Activated CD4-positive, alpha-beta T cell treated with anti-CD3 and anti-CD28 coated beads for 36 hours (primary cell): ENCODE measurements at regions of chr9 and their contacts with region 1.

Region 1: GRCh38 chr9:87324613-87325194 is 173.0 kb upstream of the DAPK1 start:
- DNase-seq: no peak
- ATAC-seq: no peak
- H3K4me3 Mint-ChIP-seq: no peak overlapping the region
- H3K27ac Mint-ChIP-seq: no peak overlapping the region
- H3K4me1 Mint-ChIP-seq: no peaks in the 10 kb centered on the region
- H3K27me3 Mint-ChIP-seq: peaks cover 15% of the 10 kb centered on the region

Region 2: GRCh38 chr9:86202338-86202882 is 1122.3 kb before region 1 on chr9:
- CTCF ChIA-PET with region 1: no interaction called
- POLR2A ChIA-PET with region 1: no interaction called
- intact Hi-C with region 1: loop called (anchors 5 to 10 kb)
- DNase-seq: peak; percentile 30
- ATAC-seq: peak; percentile 57
- H3K4me3 Mint-ChIP-seq: no peak overlapping the region
- H3K27ac Mint-ChIP-seq: no peak overlapping the region
- H3K4me1 Mint-ChIP-seq: peaks cover 3% of the 10 kb centered on the region
- H3K27me3 Mint-ChIP-seq: peaks cover 6% of the 10 kb centered on the region

Region 3: DNA sequence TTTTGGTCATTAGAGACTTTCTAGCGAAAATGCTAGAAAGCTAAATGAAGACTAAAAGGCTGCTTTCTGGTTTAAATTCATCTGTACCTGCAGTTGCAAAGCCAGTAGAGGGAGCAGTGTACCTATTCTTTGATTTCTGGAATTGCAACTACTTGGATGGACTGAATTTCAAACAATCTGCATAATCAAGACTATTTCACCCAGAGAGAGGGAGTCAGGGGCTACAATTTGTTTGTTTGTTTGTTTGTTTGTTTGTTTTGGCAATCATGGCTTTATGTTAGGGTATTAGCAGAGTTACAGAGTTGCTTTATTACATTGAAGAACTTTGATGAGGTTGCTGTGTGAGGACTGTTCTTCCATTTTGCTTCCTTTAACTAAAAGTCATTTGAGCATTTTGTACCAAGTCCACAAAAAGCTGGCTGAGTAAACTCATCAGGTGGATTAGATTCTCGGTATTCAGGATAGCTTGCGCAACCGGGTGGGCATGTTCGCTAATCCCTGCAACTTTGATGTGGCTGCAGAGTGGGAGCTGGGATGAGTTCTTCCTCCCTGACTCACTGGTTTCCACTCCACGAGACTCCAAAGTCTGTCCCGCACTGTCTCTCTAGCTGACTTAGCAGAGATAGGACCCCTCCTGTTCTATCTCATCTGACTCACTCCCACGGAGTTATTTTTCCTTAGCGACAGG is 890.5 kb before region 1 on chr9:
- CTCF ChIA-PET with region 1: interaction called, 22 read pairs
- POLR2A ChIA-PET with region 1: no interaction called
- intact Hi-C with region 1: loop called (anchors 1 to 2 kb)
- DNase-seq: no peak
- ATAC-seq: no peak
- H3K4me3 Mint-ChIP-seq: no peak overlapping the region
- H3K27ac Mint-ChIP-seq: no peak overlapping the region
- H3K4me1 Mint-ChIP-seq: no peaks in the 10 kb centered on the region
- H3K27me3 Mint-ChIP-seq: peaks cover 13% of the 10 kb centered on the region

Region 4: DNA sequence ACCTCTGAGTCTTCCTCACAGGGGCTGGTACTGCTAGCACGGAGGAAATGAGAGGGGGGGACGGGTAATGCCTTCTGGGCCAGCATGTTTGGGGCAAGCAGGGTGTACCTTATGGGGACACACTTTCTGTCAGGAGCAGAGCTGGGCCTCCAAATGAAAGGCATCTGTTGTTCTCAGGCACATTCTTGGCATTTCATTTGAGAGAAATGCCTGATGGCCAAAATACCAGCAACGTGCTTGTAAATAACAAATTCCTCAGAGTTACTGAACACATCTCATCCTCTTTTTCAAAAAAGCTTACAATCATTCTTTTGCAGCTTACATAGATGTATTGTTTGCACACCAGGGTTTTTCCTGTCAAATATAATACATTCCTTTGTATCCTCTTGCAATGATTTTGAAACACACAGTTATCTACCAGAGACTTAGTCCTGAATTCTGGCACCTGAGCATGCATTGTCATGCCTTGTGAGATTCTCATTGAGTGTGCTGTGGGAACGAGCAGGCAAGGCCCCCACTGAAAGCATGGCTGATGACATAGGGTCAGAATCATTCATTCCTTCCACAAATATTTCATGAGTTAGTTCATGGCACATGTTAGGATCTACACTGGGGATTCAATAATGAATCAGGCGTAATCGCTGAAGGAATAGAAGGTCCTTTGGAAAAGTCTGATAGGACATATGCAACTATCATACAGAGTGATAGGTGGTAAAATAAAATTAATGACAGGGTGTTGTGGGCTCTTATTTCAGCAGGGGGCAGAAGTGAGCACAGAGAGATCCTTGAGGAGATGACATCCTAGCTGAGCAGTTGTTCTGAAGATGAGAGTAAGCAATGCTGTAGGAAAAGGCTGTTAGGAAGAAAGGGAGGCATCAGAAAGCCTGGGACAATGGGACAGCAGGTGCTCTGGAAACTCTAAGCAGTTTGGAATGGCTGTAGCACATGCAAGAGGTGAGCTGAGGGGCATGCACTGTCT is 709.5 kb before region 1 on chr9:
- CTCF ChIA-PET with region 1: interaction called, 3 read pairs
- POLR2A ChIA-PET with region 1: no interaction called
- intact Hi-C with region 1: loop called in 1 of 2 experiments (anchors 1 kb)
- DNase-seq: peak; percentile 36
- ATAC-seq: no peak
- H3K4me3 Mint-ChIP-seq: no peak overlapping the region
- H3K27ac Mint-ChIP-seq: no peak overlapping the region
- H3K4me1 Mint-ChIP-seq: no peaks in the 10 kb centered on the region
- H3K27me3 Mint-ChIP-seq: peaks cover 7% of the 10 kb centered on the region

Region 5: DNA sequence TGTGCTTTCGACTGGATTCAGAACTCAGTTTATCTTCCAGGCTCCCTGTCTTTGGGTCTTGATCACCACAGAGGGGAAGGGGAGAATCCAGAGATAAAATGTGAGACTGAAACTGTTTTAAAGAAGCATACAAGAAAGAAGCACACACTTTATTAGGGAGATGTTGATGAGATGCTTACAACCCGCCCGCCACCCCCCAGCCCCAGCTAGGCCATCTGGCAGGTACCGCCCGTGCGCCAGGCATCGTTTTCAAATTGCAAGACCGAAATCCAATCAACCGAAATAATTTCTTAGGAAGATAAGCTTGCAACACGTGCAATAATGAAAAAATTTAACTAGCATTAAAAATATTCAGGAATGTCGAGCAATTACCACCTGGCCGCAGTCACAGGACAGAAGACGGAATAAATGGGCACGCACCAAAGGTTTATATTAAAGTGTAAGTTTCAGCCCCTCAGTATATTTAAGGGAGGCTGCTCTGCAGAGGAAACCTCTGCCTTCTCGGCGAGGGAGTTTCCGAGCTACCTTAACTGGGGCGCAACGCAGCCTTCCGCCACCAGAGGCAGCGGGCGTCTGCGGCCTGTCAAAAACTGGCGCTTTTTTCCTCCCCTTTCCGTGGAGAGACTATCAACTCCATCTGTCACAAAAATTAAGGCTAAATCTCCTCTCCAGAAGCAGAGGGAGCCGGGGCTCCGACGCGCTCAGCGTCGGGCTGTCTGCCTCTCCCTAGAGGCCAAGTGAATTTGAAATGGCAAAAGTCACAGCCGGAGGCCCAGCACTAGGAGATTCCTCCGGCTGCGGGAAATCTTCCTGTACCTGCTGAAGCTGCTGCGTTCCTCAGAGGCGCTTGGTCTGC is 376.4 kb before region 1 on chr9:
- CTCF ChIA-PET with region 1: interaction called, 3 read pairs
- POLR2A ChIA-PET with region 1: no interaction called
- intact Hi-C with region 1: loop called (anchors 2 to 10 kb)
- DNase-seq: peak; percentile 85
- ATAC-seq: peak; percentile 55
- H3K4me3 Mint-ChIP-seq: peak overlapping the region; percentile 74
- H3K27ac Mint-ChIP-seq: no peak overlapping the region
- H3K4me1 Mint-ChIP-seq: peaks cover 9% of the 10 kb centered on the region
- H3K27me3 Mint-ChIP-seq: peaks cover 16% of the 10 kb centered on the region

Region 6: DNA sequence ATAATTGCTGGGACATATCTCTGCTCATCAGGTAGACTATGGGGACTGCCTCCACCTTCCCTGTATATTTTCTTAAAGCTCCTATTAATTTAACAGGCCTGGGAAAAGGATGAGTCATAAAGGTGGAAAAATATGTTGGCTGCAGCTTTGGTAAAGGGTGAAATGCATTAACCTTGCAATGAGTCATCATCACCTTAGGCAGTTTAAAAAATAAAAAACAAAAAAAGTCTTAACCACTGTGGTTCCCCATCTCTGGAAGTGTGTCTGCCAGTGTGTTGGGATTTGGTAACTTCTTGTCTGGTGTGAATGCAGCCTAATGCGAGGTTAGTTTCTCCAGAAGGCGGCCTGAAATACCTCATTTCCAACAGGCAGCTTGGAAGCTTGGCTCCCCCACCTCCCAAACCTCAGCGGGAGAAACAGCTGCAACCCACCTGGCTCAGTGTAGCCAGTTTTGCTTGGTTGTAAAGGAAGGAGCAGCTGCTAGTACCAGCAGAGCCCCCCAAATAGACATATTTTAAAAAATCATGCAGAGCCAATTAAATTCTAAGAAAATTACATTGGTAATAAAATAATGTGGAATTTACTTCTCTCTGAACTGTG is 112.0 kb before region 1 on chr9:
- CTCF ChIA-PET with region 1: no interaction called
- POLR2A ChIA-PET with region 1: no interaction called
- intact Hi-C with region 1: no loop called
- DNase-seq: no peak
- ATAC-seq: no peak
- H3K4me3 Mint-ChIP-seq: no peak overlapping the region
- H3K27ac Mint-ChIP-seq: no peak overlapping the region
- H3K4me1 Mint-ChIP-seq: no peaks in the 10 kb centered on the region
- H3K27me3 Mint-ChIP-seq: peaks cover 16% of the 10 kb centered on the region

Region 7: DNA sequence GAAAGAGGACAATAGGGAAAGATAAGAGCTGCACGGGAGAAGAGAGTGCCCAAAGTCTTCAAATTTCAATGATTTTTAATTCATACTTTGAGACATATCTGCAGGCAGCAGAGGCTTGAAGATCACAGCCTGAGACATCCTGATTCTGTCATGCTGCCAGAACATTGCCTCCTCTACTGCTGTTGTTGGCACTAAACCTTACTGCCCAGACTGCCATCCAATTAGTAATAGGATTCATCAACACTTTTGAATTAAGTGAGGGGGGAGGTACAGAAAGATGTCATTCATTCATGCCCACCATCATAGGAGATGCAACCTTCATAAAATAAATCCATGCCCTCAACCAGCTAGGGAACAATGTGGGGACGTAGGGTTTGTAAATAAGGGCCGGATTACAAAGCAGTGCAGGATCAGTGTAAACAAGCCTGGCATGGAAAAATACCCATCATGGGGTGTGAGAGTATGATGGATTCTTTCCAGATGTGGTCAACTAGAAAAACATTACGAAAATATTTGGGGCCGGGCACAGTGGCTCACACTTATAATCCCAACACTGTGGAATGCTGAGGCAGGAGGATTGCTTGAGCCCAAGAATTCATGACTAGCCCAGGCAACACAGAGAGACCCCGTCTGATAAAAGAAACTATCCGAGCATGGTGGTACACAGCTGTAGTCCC is 50.8 kb after region 1 on chr9:
- CTCF ChIA-PET with region 1: no interaction called
- POLR2A ChIA-PET with region 1: no interaction called
- intact Hi-C with region 1: no loop called
- DNase-seq: no peak
- ATAC-seq: no peak
- H3K4me3 Mint-ChIP-seq: no peak overlapping the region
- H3K27ac Mint-ChIP-seq: no peak overlapping the region
- H3K4me1 Mint-ChIP-seq: peaks cover 15% of the 10 kb centered on the region
- H3K27me3 Mint-ChIP-seq: peaks cover 37% of the 10 kb centered on the region